IMR-90 (cell line): ENCODE measurements at regions of chr20 and their contacts with region 1.

Region 1: GRCh38 chr20:41034239-41034638 is 5.6 kb downstream of the TOP1 start:
- DNase-seq: no peak
- ATAC-seq: no peak
- H3K4me3 ChIP-seq: no peak overlapping the region
- H3K27ac ChIP-seq: peak overlapping the region; percentile 29; the same call in 1 of the 2 replicates
- H3K4me1 ChIP-seq: peaks cover 12% of the 10 kb centered on the region
- H3K27me3 ChIP-seq: no peaks in the 10 kb centered on the region
- CTCF ChIP-seq: no peak
- POLR2A ChIP-seq: no peak
- RAD21 ChIP-seq: no peak

Region 2: DNA sequence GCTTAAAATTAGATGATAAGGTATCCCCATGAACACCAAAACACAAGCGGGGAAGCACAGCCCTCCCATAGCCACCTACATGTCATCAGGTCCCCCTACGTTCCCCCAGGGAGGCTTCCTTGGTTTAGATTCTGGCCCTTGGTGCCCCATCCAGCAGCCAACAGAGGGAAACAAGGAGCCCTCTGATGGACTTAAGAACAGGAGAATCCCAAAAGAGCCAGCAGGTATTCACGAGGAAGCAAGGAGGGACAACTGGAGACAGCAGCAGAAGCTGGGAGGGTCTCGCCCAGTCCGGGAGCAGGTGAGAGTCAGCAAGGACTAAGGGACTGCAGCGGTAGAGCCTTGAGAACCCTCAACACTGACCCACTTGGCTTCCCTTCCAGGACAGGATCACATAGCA is 64.0 kb before region 1 on chr20:
- CTCF ChIA-PET with region 1: interaction called, 3 read pairs
- POLR2A ChIA-PET with region 1: no interaction called
- dilution Hi-C with region 1: no loop called
- in situ Hi-C with region 1: no loop called
- intact Hi-C with region 1: loop called (anchors 2 kb)
- DNase-seq: no peak
- ATAC-seq: no peak
- H3K4me3 ChIP-seq: no peak overlapping the region
- H3K27ac ChIP-seq: no peak overlapping the region
- H3K4me1 ChIP-seq: peaks cover 2% of the 10 kb centered on the region; the same call in 1 of the 2 replicates
- H3K27me3 ChIP-seq: no peaks in the 10 kb centered on the region
- CTCF ChIP-seq: peak; percentile 23; the same call in 1 of the 2 replicates
- POLR2A ChIP-seq: no peak
- RAD21 ChIP-seq: no peak

Region 3: DNA sequence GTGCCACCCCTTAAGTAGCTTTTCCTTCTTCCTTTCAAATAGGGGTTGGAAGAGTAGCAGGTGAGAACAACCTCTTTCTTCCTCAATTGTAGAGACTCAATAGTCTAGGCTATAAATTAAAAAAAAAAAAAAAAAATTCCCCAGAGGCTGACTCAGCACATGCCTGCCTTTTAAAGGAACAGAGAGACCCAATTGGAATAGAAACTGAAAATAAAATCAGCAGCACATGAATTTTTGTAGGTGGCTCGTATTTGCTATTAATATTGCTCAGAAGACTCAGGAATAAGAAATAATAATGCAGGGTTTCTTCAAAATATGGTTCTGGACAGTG is 13.7 kb after region 1 on chr20:
- CTCF ChIA-PET with region 1: interaction called, 5 read pairs
- POLR2A ChIA-PET with region 1: interaction called, 3 read pairs
- dilution Hi-C with region 1: no loop called
- in situ Hi-C with region 1: no loop called
- intact Hi-C with region 1: loop called (anchors 2 kb)
- DNase-seq: no peak
- ATAC-seq: no peak
- H3K4me3 ChIP-seq: no peak overlapping the region
- H3K27ac ChIP-seq: no peak overlapping the region
- H3K4me1 ChIP-seq: peaks cover 33% of the 10 kb centered on the region
- H3K27me3 ChIP-seq: no peaks in the 10 kb centered on the region
- CTCF ChIP-seq: no peak
- POLR2A ChIP-seq: no peak
- RAD21 ChIP-seq: no peak

Region 4: DNA sequence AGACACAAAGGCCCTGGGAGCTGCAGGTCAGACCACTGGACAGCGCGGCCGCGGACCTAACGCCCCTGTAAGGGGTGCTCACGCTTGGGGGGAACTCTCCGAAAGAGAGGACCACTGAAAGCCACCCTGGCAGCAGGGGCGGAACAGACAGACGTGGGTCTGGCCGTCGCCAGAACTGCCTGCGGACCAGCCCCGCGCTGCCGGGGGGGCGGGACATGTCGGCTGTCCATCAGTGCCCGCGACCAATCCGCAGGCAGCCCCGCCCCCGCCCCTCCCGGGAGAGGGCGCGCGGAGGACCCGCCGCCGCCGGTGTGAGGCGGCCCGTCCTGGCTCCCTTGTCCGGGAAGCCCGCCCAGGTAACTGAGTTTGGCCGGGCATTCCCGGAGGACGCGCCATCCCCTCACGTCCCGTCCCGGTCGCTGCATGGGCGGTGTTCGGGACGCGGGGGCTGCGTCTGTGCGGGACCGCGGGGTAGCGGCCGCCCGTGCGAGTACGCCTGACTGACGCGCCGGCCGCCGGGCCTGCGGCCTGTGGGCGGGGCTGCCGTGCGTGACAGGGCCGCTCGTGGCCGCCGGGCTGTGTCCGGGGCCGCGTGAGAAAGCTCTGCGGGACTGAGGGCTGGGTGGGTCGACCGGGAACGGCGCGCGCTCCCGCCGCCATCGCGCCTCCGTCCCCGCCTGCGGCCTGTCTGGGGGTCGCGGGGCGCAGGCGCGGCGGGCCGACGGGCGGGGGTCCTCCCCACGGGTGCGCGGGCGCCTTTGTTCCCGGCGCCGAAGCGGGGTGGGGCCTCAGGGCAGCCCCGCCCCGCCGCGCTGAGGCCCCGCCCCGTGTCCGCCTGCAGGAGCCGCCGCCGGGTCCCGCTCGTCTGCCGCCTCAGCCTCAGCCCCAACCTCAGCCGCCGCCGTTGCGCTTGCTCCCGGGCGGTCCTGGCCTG is 102.7 kb after region 1 on chr20 and contains the start of gene PLCG1:
- CTCF ChIA-PET with region 1: no interaction called
- POLR2A ChIA-PET with region 1: no interaction called
- dilution Hi-C with region 1: no loop called
- in situ Hi-C with region 1: no loop called
- intact Hi-C with region 1: no loop called
- DNase-seq: peak; percentile 67
- ATAC-seq: peak; percentile 84
- H3K4me3 ChIP-seq: peak within 1 kb of the TSS; percentile 98
- H3K27ac ChIP-seq: peak within 1 kb of the TSS; percentile 94
- H3K4me1 ChIP-seq: peaks cover 22% of the 10 kb centered on the region
- H3K27me3 ChIP-seq: no peaks in the 10 kb centered on the region
- CTCF ChIP-seq: no peak
- POLR2A ChIP-seq: peak; percentile 62
- RAD21 ChIP-seq: no peak
- total RNA-seq, gene PLCG1: 54.7 and 59.1 TPM in 2 replicates

Region 5: DNA sequence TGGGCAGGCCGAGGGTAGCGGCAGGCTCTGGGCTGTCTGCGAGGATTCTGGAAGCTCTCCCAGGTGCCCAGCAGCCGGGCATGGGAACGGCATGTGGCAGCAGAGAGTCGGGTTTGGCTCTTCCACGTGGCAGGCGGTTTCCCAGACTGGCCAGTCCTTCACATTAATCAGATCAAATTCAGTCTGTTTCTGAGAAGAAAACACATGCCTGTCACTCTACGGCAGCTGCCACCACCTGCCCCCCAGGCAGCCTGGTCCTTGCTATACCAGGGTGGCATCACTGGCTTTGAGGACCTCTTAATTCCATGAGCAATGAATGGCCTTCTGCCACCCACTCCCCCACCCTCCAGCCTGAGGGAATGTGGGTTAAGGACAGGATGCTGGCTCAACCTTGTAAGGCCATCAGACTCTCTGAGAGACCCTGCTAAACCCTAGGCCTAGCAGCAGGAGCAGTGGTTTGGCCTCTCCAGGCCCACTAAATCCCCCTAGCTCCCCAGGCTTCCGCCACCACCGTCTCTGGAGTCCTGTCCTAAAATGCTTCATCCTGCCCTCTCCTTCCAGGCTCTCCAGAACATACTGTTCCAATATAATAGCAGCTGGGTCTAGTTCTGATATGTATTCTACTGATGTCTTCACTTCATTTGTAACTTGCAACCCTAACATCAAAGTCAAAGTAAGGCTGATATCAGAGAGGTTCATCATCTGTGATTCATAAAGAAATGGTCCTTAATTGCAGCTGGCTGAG is 150.9 kb after region 1 on chr20:
- CTCF ChIA-PET with region 1: interaction called, 12 read pairs
- POLR2A ChIA-PET with region 1: no interaction called
- dilution Hi-C with region 1: no loop called
- in situ Hi-C with region 1: no loop called
- intact Hi-C with region 1: no loop called
- DNase-seq: no peak
- ATAC-seq: no peak
- H3K4me3 ChIP-seq: no peak overlapping the region
- H3K27ac ChIP-seq: no peak overlapping the region
- H3K4me1 ChIP-seq: no peaks in the 10 kb centered on the region
- H3K27me3 ChIP-seq: no peaks in the 10 kb centered on the region
- CTCF ChIP-seq: no peak
- POLR2A ChIP-seq: no peak
- RAD21 ChIP-seq: no peak